Sigmoid colon (tissue), 7 donors: ENCODE measurements at regions of chr3 and their contacts with region 1.

Region 1: GRCh38 chr3:164806187-164806586 is 272.1 kb downstream of the SI start:
- DNase-seq: no peak
- H3K4me3 ChIP-seq: no peak overlapping the region
- H3K27ac ChIP-seq: no peak overlapping the region
- H3K4me1 ChIP-seq: no peaks in the 10 kb centered on the region
- H3K27me3 ChIP-seq: no peaks in the 10 kb centered on the region
- CTCF ChIP-seq: no peak
- EP300 ChIP-seq: no peak
- POLR2A ChIP-seq: no peak

Region 2: GRCh38 chr3:165683947-165684346 is 877.8 kb after region 1 on chr3:
- intact Hi-C with region 1: loop called (anchors 5 kb)
- DNase-seq: no peak
- H3K4me3 ChIP-seq: no peak overlapping the region
- H3K27ac ChIP-seq: peak overlapping the region in 1 of 4 donors; percentile 11
- H3K4me1 ChIP-seq: peaks cover 0 to 15% (median 4%) of the 10 kb centered on the region in 4 donors
- H3K27me3 ChIP-seq: no peaks in the 10 kb centered on the region
- CTCF ChIP-seq: no peak
- EP300 ChIP-seq: no peak
- POLR2A ChIP-seq: no peak